Panc1 (cell line): ENCODE measurements at regions of chr2 and their contacts with region 1.

Region 1: DNA sequence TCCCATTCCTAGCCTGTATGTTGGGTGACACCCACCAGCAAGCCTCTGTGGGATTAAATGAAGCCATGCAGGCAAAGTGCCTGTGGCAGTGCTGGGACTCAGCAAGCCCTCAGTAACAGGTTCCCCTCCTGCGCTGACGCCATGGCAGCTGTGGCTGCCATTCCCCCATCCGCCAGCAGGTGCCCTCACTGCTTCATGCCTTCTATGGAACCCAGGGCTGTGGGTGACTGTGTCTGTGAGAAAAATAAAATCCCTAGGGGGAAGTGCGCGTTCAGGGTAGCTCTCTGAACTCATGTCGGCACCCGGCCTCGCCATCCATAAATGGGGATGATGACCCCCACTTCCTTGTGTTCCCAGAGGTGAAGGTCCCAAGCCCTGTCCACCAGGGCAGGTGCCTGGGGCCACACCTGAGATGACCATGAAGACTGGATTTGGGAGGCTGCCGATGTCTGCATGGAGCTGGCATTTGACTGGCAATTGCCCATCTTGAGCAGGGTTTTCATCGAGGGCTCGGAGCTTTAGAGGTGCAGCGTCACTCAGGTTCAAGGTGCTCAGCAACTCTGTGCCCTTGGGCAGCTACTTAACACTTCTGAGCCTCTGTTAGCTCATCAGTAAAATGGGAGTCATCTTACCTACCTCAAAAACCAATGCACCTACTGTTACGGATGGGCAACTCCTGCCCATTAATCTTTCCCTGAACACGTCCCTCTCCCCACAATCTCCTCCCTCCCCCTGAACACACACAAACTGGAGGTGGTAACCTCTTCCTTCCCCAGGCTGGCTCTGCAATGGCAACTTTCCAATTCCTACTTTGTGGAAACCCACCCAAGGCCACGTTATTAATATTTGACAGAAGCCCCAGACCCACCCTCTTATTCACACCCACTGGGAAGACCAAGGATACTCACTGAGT is 2.9 kb upstream of the MAL start:
- DNase-seq: peak; percentile 54
- ATAC-seq: peak; percentile 85
- H3K4me3 ChIP-seq: no peak overlapping the region
- H3K27ac ChIP-seq: no peak overlapping the region
- H3K4me1 ChIP-seq: peaks cover 3% of the 10 kb centered on the region; the same call in 1 of the 2 replicates
- H3K27me3 ChIP-seq: peaks cover 7% of the 10 kb centered on the region; the same call in 1 of the 2 replicates
- CTCF ChIP-seq: peak; percentile 96

Region 2: DNA sequence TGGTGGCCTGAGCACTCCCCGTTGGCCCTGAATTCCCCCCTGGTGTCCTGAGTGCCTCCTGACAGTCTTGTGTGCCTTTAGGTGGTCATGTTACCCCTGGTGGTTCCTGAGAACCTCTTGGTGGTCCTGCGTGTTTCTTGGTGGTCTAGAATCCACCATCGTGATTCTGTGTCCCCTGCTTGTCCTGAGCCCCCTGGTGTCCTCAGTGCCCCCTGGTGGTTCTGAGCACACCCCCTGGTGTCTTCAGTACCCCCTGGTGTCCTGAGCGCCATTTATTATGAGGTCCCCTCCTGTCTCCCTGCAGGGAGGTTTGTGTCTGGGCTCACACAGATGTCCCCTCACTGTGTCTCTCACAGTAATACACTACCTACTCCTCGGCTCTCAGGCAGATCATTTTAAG is 58.4 kb before region 1 on chr2:
- CTCF ChIA-PET with region 1: no interaction called
- POLR2A ChIA-PET with region 1: no interaction called
- in situ Hi-C with region 1: no loop called
- intact Hi-C with region 1: no loop called
- DNase-seq: no peak
- ATAC-seq: no peak
- H3K4me3 ChIP-seq: no peak overlapping the region
- H3K27ac ChIP-seq: no peak overlapping the region
- H3K4me1 ChIP-seq: no peaks in the 10 kb centered on the region
- H3K27me3 ChIP-seq: peaks cover 40% of the 10 kb centered on the region
- CTCF ChIP-seq: peak; percentile 6; the same call in 1 of the 2 replicates

Region 3: DNA sequence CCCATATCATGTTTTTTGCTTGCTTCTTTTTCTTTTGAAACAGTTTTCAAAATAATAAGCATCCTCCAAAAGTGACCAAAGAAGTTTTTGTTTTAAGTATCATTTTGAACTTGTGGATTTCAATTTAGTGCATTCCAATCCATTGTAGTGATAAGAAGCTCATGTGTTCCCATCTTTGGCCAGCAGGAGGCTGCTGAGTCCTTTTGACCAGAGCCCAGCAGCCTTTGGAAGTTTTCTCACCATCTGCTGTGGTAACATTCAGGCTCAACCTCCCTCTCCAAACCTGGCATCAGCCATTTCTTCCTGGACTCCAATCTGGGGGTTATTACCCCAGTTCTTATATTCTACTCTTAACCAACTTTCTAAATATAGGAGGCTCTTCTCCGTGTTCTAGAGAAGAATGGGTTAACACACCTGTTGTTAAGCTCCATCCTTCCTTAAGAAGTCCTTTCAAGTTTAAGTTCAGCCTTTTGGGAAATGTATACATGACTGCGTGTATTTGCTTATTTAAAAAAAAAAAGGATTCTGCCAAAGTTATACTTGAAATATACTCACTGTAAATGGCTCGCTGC is 36.1 kb before region 1 on chr2:
- CTCF ChIA-PET with region 1: interaction called, 4 read pairs
- POLR2A ChIA-PET with region 1: interaction called, 12 read pairs
- in situ Hi-C with region 1: no loop called
- intact Hi-C with region 1: no loop called
- DNase-seq: peak; percentile 58
- ATAC-seq: peak; percentile 90
- H3K4me3 ChIP-seq: no peak overlapping the region
- H3K27ac ChIP-seq: no peak overlapping the region
- H3K4me1 ChIP-seq: no peaks in the 10 kb centered on the region
- H3K27me3 ChIP-seq: peaks cover 12% of the 10 kb centered on the region
- CTCF ChIP-seq: peak; percentile 89

Region 4: GRCh38 chr2:95053543-95053942 is 31.0 kb after region 1 on chr2:
- CTCF ChIA-PET with region 1: interaction called, 3 read pairs
- POLR2A ChIA-PET with region 1: no interaction called
- in situ Hi-C with region 1: no loop called
- intact Hi-C with region 1: loop called (anchors 2 kb)
- DNase-seq: no peak
- ATAC-seq: no peak
- H3K4me3 ChIP-seq: no peak overlapping the region
- H3K27ac ChIP-seq: no peak overlapping the region
- H3K4me1 ChIP-seq: no peaks in the 10 kb centered on the region; the same call in 1 of the 2 replicates
- H3K27me3 ChIP-seq: peaks cover 8% of the 10 kb centered on the region
- CTCF ChIP-seq: no peak

Region 5: DNA sequence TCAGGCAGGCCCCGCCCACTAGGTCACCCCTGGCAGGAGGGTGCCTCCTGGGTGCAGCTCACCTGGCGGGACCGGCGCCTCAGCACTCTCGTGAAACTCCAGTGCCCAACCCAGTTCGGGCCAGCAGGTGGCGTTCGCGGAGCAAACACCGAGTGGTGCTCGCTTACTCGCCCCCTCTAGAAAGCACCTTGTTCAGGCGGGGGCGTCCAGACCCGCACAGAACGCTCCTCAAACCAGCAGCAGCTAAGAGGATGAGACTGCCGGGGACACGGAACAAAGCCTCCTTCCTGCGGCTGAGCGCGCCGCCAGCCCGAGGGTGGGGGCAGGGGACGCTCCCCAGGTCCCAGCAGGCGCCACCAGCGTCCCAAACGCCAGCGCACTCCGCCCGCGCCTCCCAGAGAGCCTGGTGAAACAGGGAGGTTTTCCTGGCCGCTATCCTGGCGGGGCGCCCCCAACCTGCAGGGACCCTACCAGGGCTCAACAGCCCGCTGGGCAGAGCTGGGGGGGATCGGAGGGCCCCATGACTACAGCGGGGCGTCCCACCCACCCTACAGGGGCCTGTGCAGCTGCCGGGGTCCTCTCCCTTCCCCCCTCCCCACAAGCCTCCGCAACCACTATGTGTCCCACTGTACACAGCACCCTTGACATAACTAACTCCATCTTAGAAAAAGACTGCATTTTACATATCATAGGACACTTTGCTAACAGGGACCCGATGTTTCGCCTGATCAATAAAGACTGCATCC is 54.4 kb after region 1 on chr2:
- CTCF ChIA-PET with region 1: interaction called, 14 read pairs
- POLR2A ChIA-PET with region 1: interaction called, 3 read pairs
- in situ Hi-C with region 1: no loop called
- intact Hi-C with region 1: loop called (anchors 2 kb)
- DNase-seq: peak; percentile 25
- ATAC-seq: peak; percentile 89
- H3K4me3 ChIP-seq: peak overlapping the region; percentile 49 to 63
- H3K27ac ChIP-seq: no peak overlapping the region
- H3K4me1 ChIP-seq: no peaks in the 10 kb centered on the region; the same call in none of the 2 replicates
- H3K27me3 ChIP-seq: peaks cover 12% of the 10 kb centered on the region
- CTCF ChIP-seq: peak; percentile 95

Region 6: DNA sequence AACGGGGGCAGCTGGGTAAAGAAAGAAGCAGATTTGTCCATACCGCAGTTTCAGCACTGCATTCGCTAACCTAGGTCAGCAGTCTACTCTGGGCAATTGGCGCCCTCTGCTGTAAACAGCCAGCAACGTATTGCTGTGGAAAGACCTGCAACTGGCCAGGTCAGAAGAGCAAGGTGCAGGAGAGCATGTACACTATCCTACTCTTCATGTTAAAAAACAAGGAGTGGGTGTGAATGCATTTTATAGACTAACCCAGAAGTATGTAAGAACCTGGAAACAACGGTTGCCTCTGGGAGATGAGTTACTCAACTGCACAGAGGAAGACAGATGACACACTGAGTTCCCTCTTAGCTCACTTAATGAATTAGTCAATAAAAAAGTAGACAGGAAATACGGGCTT is 92.9 kb after region 1 on chr2:
- CTCF ChIA-PET with region 1: no interaction called
- POLR2A ChIA-PET with region 1: no interaction called
- in situ Hi-C with region 1: no loop called
- intact Hi-C with region 1: loop called (anchors 2 kb)
- DNase-seq: no peak
- ATAC-seq: peak; percentile 100
- H3K4me3 ChIP-seq: no peak overlapping the region
- H3K27ac ChIP-seq: no peak overlapping the region
- H3K4me1 ChIP-seq: no peaks in the 10 kb centered on the region; the same call in 1 of the 2 replicates
- H3K27me3 ChIP-seq: no peaks in the 10 kb centered on the region
- CTCF ChIP-seq: peak; percentile 93

Region 7: DNA sequence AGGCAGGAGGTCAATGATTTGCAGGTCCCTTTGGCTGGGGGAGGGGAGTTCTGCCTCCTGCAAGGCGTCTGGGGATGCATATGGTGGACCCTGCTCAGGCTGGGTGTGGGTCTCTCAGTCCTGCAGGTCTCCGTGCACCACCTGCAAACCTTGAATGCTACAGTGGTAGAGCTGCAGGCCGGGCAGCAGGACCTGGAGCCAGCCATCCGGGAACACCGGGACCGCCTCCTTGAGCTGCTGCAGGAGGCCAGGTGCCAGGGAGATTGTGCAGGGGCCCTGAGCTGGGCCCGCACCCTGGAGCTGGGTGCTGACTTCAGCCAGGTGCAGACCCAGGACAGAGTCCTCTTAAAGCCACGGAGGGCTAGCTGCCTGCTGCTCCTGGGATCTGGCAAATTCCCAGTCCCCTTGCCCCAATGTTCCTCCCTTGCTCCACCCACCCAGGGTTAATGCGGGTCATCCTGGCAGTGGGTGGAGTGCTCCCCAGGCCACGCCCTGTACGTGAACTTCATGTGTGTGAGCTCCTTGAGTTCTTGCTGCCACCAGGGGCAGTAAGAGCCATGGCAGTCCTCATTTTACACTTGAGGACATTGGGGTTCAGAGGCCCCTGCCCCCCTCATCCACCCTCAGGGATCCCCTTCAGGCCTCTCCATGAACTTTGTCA is 254.8 kb after region 1 on chr2:
- CTCF ChIA-PET with region 1: no interaction called
- POLR2A ChIA-PET with region 1: no interaction called
- in situ Hi-C with region 1: no loop called
- intact Hi-C with region 1: no loop called
- DNase-seq: no peak
- ATAC-seq: 0 out of 2 replicates have a peak, but pooled peaks have one; percentile 42
- H3K4me3 ChIP-seq: no peak overlapping the region
- H3K27ac ChIP-seq: no peak overlapping the region
- H3K4me1 ChIP-seq: no peaks in the 10 kb centered on the region
- H3K27me3 ChIP-seq: no peaks in the 10 kb centered on the region
- CTCF ChIP-seq: no peak